ENCODE measurements at regions of chrX and their contacts with region 1.

Region 1: GRCh38 chrX:110310896-110311295 is 7.0 kb downstream of the AMMECR1 start:
- DNase-seq: peak in 7 of 14 experiments; percentile 3 to 69 (median 31)
- ATAC-seq: peak; percentile 78
- H3K4me3 ChIP-seq: no peak overlapping the region
- H3K4me3 Mint-ChIP-seq: no peak overlapping the region
- H3K27ac ChIP-seq: no peak overlapping the region
- H3K27ac Mint-ChIP-seq: peak overlapping the region; percentile 61
- H3K4me1 ChIP-seq: peaks cover 16% of the 10 kb centered on the region
- H3K4me1 Mint-ChIP-seq: peaks cover 76% of the 10 kb centered on the region
- H3K27me3 ChIP-seq: no peaks in the 10 kb centered on the region
- H3K27me3 Mint-ChIP-seq: no peaks in the 10 kb centered on the region
- CTCF ChIP-seq: no peak

Region 2: GRCh38 chrX:110226931-110227330 is 84.0 kb before region 1 on chrX:
- CTCF ChIA-PET with region 1: no interaction called
- POLR2A ChIA-PET with region 1: interaction called, 3 read pairs
- intact Hi-C with region 1: loop called (anchors 5 to 10 kb)
- DNase-seq: no peak
- ATAC-seq: no peak
- H3K4me3 ChIP-seq: no peak overlapping the region
- H3K4me3 Mint-ChIP-seq: no peak overlapping the region
- H3K27ac ChIP-seq: no peak overlapping the region
- H3K27ac Mint-ChIP-seq: peak overlapping the region; percentile 93
- H3K4me1 ChIP-seq: peaks cover 14% of the 10 kb centered on the region
- H3K4me1 Mint-ChIP-seq: peaks cover 55% of the 10 kb centered on the region
- H3K27me3 ChIP-seq: no peaks in the 10 kb centered on the region
- H3K27me3 Mint-ChIP-seq: no peaks in the 10 kb centered on the region
- CTCF ChIP-seq: no peak

Region 3: GRCh38 chrX:110268886-110269285 is 42.0 kb before region 1 on chrX:
- CTCF ChIA-PET with region 1: interaction called, 3 read pairs
- POLR2A ChIA-PET with region 1: no interaction called
- intact Hi-C with region 1: loop called in 1 of 2 experiments (anchors 5 kb)
- DNase-seq: peak in 3 of 14 experiments; percentile 10 to 34 (median 17)
- ATAC-seq: peak; percentile 56
- H3K4me3 ChIP-seq: no peak overlapping the region
- H3K4me3 Mint-ChIP-seq: peak overlapping the region; percentile 31
- H3K27ac ChIP-seq: peak overlapping the region in 1 of 2 donors; percentile 29
- H3K27ac Mint-ChIP-seq: peak overlapping the region; percentile 84
- H3K4me1 ChIP-seq: peaks cover 6% of the 10 kb centered on the region
- H3K4me1 Mint-ChIP-seq: peaks cover 59% of the 10 kb centered on the region
- H3K27me3 ChIP-seq: no peaks in the 10 kb centered on the region
- H3K27me3 Mint-ChIP-seq: no peaks in the 10 kb centered on the region
- CTCF ChIP-seq: no peak